MCF 10A (cell line): ENCODE measurements at regions of chr12 and their contacts with region 1.

Region 1: GRCh38 chr12:32755654-32756475 is at the start of gene YARS2:
- DNase-seq: peak; percentile 97
- H3K4me3 Mint-ChIP-seq: peak within 1 kb of the TSS; percentile 86
- H3K27ac Mint-ChIP-seq: peak within 1 kb of the TSS; percentile 90
- H3K4me1 Mint-ChIP-seq: peaks cover 13% of the 10 kb centered on the region
- H3K27me3 Mint-ChIP-seq: no peaks in the 10 kb centered on the region
- CTCF ChIP-seq: peak; percentile 80
- total RNA-seq, gene YARS2: 27.2 and 30.1 TPM in 2 replicates

Region 2: DNA sequence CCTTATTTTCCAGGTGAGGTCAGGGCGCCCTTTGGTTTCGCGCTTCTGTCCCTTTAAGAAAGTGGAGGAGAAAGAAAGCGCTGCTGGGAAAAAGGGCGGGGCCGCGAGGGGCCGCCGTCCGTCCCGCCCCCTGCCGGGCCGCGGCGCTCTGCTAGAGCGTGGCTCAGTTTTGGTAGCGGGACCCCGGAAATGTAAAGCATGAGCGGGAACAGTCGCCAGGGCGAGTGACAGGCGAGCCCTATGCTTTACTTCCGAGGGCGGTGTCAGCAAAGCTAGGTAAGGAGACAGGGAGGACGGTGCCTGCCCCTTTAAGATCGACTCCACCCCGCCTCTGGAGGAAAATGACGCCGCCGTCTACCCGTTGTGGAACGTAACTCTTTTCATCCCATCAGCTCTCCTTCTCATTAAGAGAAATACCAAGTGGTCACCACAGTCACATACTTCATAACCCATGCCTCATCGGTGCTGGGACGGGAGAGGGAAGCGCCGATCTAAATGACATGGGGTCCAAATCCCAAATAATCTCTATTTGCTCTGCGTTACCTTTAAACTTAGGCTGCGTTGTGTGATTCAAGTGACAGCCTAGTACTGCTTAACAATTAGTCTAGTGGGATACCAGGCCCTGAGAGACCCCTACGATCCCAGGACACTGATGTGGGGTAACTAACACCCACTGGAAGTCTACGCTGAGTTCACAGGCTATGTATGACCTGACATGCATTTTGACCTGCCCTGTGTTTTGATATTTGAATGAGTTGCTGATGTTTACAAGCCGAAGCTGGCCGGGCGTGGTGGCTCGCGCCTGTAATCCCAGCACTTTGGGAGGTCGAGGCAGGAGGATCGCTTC is 1096.6 kb before region 1 on chr12 and contains the start of gene ETFBKMT:
- CTCF ChIA-PET with region 1: no interaction called
- POLR2A ChIA-PET with region 1: no interaction called
- intact Hi-C with region 1: loop called (anchors 10 kb)
- DNase-seq: peak; percentile 96
- H3K4me3 Mint-ChIP-seq: peak within 1 kb of the TSS; percentile 93
- H3K27ac Mint-ChIP-seq: peak within 1 kb of the TSS; percentile 94
- H3K4me1 Mint-ChIP-seq: peaks cover 3% of the 10 kb centered on the region
- H3K27me3 Mint-ChIP-seq: no peaks in the 10 kb centered on the region
- CTCF ChIP-seq: no peak
- total RNA-seq, gene ETFBKMT: 3.0 and 3.3 TPM in 2 replicates

Region 3: DNA sequence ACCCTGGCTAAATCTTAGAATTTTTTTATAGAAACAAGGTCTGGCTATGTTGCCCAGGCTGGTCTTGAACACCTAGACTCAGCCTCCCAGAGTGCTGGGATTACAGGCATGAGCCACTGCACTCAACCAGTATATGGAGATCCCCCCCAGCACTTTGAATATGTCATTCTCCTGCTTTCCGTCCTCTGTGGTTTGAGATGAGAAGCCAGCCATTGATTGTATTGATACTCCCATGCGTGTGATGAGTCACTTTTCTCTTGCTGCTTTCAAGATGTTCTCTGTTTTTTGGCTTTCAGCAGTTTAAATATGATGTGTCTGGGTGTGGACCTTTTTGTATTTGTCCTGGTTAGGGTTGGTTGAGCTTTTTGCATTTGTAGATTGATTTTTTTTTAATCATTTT is 152.0 kb before region 1 on chr12:
- CTCF ChIA-PET with region 1: no interaction called
- POLR2A ChIA-PET with region 1: no interaction called
- intact Hi-C with region 1: no loop called
- DNase-seq: peak; percentile 3
- H3K4me3 Mint-ChIP-seq: no peak overlapping the region
- H3K27ac Mint-ChIP-seq: peak overlapping the region; percentile 66
- H3K4me1 Mint-ChIP-seq: peaks cover 16% of the 10 kb centered on the region
- H3K27me3 Mint-ChIP-seq: no peaks in the 10 kb centered on the region
- CTCF ChIP-seq: no peak

Region 4: GRCh38 chr12:32647275-32647674 is 108.6 kb before region 1 on chr12:
- CTCF ChIA-PET with region 1: no interaction called
- POLR2A ChIA-PET with region 1: no interaction called
- intact Hi-C with region 1: no loop called
- DNase-seq: no peak
- H3K4me3 Mint-ChIP-seq: no peak overlapping the region
- H3K27ac Mint-ChIP-seq: no peak overlapping the region
- H3K4me1 Mint-ChIP-seq: no peaks in the 10 kb centered on the region
- H3K27me3 Mint-ChIP-seq: no peaks in the 10 kb centered on the region
- CTCF ChIP-seq: no peak

Region 5: DNA sequence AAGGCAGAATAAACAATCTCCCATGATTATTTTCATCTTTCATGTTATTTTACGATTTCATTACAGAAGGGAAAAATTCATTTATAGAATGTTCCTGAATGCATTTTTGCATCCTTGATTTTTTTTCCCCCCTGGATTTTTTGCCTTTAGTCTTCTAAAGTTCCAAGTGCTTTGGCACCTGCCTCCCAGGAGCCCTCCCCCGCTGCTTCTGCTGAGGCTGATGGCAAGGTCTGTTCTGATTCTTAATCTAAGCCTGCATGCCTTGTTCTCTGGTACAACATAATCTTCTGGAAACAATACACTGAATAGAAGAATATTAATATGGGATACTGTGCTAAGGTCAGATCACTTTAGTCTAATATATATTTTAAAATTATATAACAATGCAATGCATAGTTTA is 18.1 kb before region 1 on chr12:
- CTCF ChIA-PET with region 1: interaction called, 6 read pairs
- POLR2A ChIA-PET with region 1: interaction called, 23 read pairs
- intact Hi-C with region 1: no loop called
- DNase-seq: no peak
- H3K4me3 Mint-ChIP-seq: no peak overlapping the region
- H3K27ac Mint-ChIP-seq: no peak overlapping the region
- H3K4me1 Mint-ChIP-seq: no peaks in the 10 kb centered on the region
- H3K27me3 Mint-ChIP-seq: no peaks in the 10 kb centered on the region
- CTCF ChIP-seq: no peak

Region 6: DNA sequence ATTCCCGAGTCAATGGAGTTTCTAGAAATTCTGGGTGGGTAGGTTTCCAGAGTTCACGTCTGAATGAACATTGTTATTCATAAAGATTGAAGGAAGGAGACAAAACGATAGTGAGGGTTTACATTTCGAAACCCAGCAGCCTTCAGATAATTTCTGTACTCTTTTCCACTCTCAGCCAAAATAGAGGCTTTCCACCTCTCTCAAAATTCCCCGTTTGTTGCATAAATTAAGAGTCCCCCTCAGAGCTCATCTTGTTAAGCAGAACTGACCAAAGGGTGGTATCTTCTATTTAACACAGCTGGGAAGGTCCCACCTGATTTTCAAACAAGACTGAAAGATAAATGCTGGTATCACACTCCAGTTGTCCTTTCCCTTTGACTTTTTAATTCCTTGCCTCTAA is 21.3 kb after region 1 on chr12:
- CTCF ChIA-PET with region 1: interaction called, 21 read pairs
- POLR2A ChIA-PET with region 1: interaction called, 3 read pairs
- intact Hi-C with region 1: no loop called
- DNase-seq: no peak
- H3K4me3 Mint-ChIP-seq: no peak overlapping the region
- H3K27ac Mint-ChIP-seq: no peak overlapping the region
- H3K4me1 Mint-ChIP-seq: no peaks in the 10 kb centered on the region
- H3K27me3 Mint-ChIP-seq: peaks cover 16% of the 10 kb centered on the region
- CTCF ChIP-seq: no peak

Region 7: GRCh38 chr12:32906407-32907165 is 150.7 kb after region 1 on chr12:
- CTCF ChIA-PET with region 1: interaction called, 20 read pairs
- POLR2A ChIA-PET with region 1: interaction called, 8 read pairs
- intact Hi-C with region 1: no loop called
- DNase-seq: peak; percentile 60
- H3K4me3 Mint-ChIP-seq: no peak overlapping the region
- H3K27ac Mint-ChIP-seq: peak overlapping the region; percentile 51
- H3K4me1 Mint-ChIP-seq: peaks cover 10% of the 10 kb centered on the region
- H3K27me3 Mint-ChIP-seq: no peaks in the 10 kb centered on the region
- CTCF ChIP-seq: no peak

Region 8: DNA sequence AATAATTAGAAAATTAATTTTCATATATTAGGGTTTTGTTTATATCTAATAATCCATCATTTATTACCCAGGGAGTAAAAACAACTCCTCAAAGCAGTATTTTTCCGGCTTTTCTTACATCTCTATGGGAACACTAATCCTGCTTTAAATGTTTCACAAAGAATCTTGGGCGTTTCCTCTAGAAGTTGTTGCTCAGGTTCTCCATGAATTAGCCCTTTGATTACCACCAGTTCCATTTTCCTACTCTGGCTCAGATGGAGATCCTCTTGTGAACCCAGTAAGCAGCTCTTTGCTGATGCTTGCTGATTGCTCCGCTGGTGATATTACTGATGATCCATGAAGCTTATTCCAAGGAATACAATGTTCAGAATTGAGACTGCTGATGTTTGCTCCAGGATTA is 219.3 kb after region 1 on chr12:
- CTCF ChIA-PET with region 1: no interaction called
- POLR2A ChIA-PET with region 1: no interaction called
- intact Hi-C with region 1: no loop called
- DNase-seq: no peak
- H3K4me3 Mint-ChIP-seq: no peak overlapping the region
- H3K27ac Mint-ChIP-seq: no peak overlapping the region
- H3K4me1 Mint-ChIP-seq: no peaks in the 10 kb centered on the region
- H3K27me3 Mint-ChIP-seq: no peaks in the 10 kb centered on the region
- CTCF ChIP-seq: no peak

Region 9: GRCh38 chr12:33587870-33588712 is 832.2 kb after region 1 on chr12:
- CTCF ChIA-PET with region 1: interaction called, 7 read pairs
- POLR2A ChIA-PET with region 1: no interaction called
- intact Hi-C with region 1: loop called (anchors 5 kb)
- DNase-seq: peak; percentile 87
- H3K4me3 Mint-ChIP-seq: no peak overlapping the region
- H3K27ac Mint-ChIP-seq: no peak overlapping the region
- H3K4me1 Mint-ChIP-seq: peaks cover 11% of the 10 kb centered on the region
- H3K27me3 Mint-ChIP-seq: no peaks in the 10 kb centered on the region
- CTCF ChIP-seq: no peak